ENCODE measurements at regions of chr20 and their contacts with region 1.

Region 1: DNA sequence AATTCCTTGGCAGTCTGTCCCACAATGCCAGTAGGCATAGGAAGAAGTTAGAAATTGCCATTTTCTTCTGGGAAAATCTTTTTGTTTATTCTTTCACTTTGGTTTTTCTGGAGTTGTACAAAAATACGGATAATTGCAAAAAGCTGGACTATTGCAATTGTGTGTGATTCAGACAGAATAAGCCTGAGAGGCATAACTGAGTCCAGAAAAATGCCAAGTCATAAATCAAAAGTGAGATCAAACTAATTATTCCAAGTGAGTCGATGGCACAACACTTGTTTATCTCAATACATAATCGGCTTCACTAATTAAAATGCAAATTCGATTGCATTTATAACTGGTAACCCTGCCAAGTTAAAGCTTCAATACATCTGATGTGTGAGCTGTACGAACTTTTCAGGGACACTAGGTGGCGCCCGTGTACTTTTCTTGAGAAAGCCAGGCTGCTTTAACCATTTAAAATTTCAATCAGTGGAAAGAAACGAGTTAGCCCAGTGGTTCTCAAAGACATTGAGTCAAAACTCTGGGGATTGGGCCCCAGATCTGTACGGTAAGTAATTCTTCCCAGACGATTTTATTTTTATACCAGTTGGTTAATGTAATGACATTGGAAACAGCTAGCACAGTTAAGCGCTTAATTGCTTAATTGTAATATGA is 102.6 kb downstream of the LAMP5 start:
- DNase-seq: peak; percentile 65 to 80
- ATAC-seq: peak; percentile 79 to 87
- H3K4me3 ChIP-seq: peak overlapping the region; percentile 39
- H3K27ac ChIP-seq: peak overlapping the region in 1 of 2 experiments; percentile 71; a peak in 4 of 6 replicates
- H3K4me1 ChIP-seq: no peaks in the 10 kb centered on the region
- CTCF ChIP-seq: peak; percentile 98
- EP300 ChIP-seq: no peak
- POLR2A ChIP-seq: no peak
- RAD21 ChIP-seq: peak; percentile 97

Region 2: GRCh38 chr20:9407805-9408421 is 209.0 kb before region 1 on chr20:
- CTCF ChIA-PET with region 1: interaction called, 385 read pairs
- POLR2A ChIA-PET with region 1: no interaction called
- DNase-seq: peak; percentile 71 to 77
- ATAC-seq: peak; percentile 94 to 97
- H3K4me3 ChIP-seq: no peak overlapping the region
- H3K27ac ChIP-seq: no peak overlapping the region
- H3K4me1 ChIP-seq: peaks cover 16% of the 10 kb centered on the region; the same call in 2 of the 3 replicates
- CTCF ChIP-seq: peak; percentile 97
- EP300 ChIP-seq: no peak
- POLR2A ChIP-seq: no peak
- RAD21 ChIP-seq: peak; percentile 95 to 97

Region 3: DNA sequence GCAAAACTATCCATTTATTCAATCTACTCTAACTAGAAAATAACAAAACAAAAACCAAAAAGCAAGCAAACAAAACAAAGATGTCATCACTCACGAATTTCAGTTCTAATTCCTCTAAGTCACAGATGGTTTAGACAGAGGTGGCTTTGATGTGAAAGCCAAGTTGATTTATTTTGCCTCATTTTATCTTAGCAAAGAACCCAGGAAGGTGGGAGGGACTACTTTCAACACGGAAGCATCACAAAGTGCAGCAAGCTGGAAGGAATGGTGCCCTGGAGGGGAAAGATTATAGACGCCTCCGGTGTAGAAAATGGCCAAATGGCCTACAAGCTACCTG is 14.1 kb before region 1 on chr20:
- CTCF ChIA-PET with region 1: interaction called, 32 read pairs
- POLR2A ChIA-PET with region 1: no interaction called
- DNase-seq: no peak
- ATAC-seq: no peak
- H3K4me3 ChIP-seq: no peak overlapping the region
- H3K27ac ChIP-seq: no peak overlapping the region
- H3K4me1 ChIP-seq: no peaks in the 10 kb centered on the region
- CTCF ChIP-seq: no peak
- EP300 ChIP-seq: no peak
- POLR2A ChIP-seq: no peak
- RAD21 ChIP-seq: no peak

Region 4: GRCh38 chr20:9903048-9903655 is 286.2 kb after region 1 on chr20:
- CTCF ChIA-PET with region 1: interaction called, 28 read pairs
- POLR2A ChIA-PET with region 1: no interaction called
- DNase-seq: peak; percentile 18 to 29
- ATAC-seq: peak in 1 of 2 experiments; percentile 71; a peak in 3 of 6 replicates
- H3K4me3 ChIP-seq: no peak overlapping the region
- H3K27ac ChIP-seq: no peak overlapping the region
- H3K4me1 ChIP-seq: no peaks in the 10 kb centered on the region
- CTCF ChIP-seq: peak; percentile 46
- EP300 ChIP-seq: no peak
- POLR2A ChIP-seq: no peak
- RAD21 ChIP-seq: peak in 1 of 2 experiments; percentile 22; a peak in 1 of 5 replicates

Region 5: GRCh38 chr20:9949563-9949962 is 332.6 kb after region 1 on chr20:
- CTCF ChIA-PET with region 1: interaction called, 20 read pairs
- POLR2A ChIA-PET with region 1: no interaction called
- DNase-seq: no peak
- ATAC-seq: no peak
- H3K4me3 ChIP-seq: no peak overlapping the region
- H3K27ac ChIP-seq: no peak overlapping the region
- H3K4me1 ChIP-seq: peaks cover 9% of the 10 kb centered on the region; the same call in 1 of the 3 replicates
- CTCF ChIP-seq: no peak
- EP300 ChIP-seq: no peak
- POLR2A ChIP-seq: no peak
- RAD21 ChIP-seq: no peak

Region 6: GRCh38 chr20:10427060-10427692 is 810.2 kb after region 1 on chr20:
- CTCF ChIA-PET with region 1: interaction called, 28 read pairs
- POLR2A ChIA-PET with region 1: no interaction called
- DNase-seq: peak; percentile 55 to 84
- ATAC-seq: peak in 1 of 2 experiments; percentile 64; a peak in 3 of 6 replicates
- H3K4me3 ChIP-seq: no peak overlapping the region
- H3K27ac ChIP-seq: peak overlapping the region; percentile 90 to 96
- H3K4me1 ChIP-seq: peaks cover 80% of the 10 kb centered on the region
- CTCF ChIP-seq: peak; percentile 98
- EP300 ChIP-seq: no peak
- POLR2A ChIP-seq: no peak
- RAD21 ChIP-seq: peak; percentile 87 to 90

Measured in A549 (cell line).